Activated T-helper 1 cell treated with anti-CD3 and anti-CD28 coated beads, Interleukin-12 subunit alpha, Interleukin-12 subunit beta, Interleukin-2, Interleukin-4 antibody, amounts not matched to agents 30 ng/mL and 10 ng/mL and 1 ng/mL, durations not matched to agents 14 hours and 24 hours and 36 hours (primary cell): ENCODE measurements at regions of chr15 and their contacts with region 1.

Region 1: DNA sequence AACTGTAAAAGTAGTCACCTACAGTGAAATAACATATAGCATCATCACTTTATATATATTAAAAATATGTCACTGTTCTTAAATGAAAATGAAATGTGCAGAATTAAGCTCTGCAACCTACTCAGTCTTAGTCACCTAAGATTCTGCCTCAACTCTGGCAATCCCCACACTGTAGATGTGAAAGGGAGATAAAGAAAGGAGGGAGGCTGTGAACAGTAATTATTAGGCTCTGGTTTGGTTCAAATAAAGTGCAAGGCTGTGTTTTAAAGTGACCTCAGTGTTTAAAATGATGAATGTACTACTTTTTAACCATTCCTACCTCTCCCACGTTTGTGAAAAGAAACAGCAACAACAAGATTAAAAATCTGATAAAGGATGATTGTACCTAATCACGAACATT is 72.2 kb downstream of the ATP8B4 start:
- DNase-seq: no peak
- H3K4me3 Mint-ChIP-seq: no peak overlapping the region
- H3K27ac Mint-ChIP-seq: peak overlapping the region; percentile 94
- H3K4me1 Mint-ChIP-seq: peaks cover 42% of the 10 kb centered on the region
- H3K27me3 Mint-ChIP-seq: no peaks in the 10 kb centered on the region

Region 2: GRCh38 chr15:50028333-50028732 is 18.5 kb before region 1 on chr15:
- intact Hi-C with region 1: loop called (anchors 2 kb)
- DNase-seq: no peak
- H3K4me3 Mint-ChIP-seq: no peak overlapping the region
- H3K27ac Mint-ChIP-seq: no peak overlapping the region
- H3K4me1 Mint-ChIP-seq: peaks cover 8% of the 10 kb centered on the region
- H3K27me3 Mint-ChIP-seq: peaks cover 6% of the 10 kb centered on the region

Region 3: DNA sequence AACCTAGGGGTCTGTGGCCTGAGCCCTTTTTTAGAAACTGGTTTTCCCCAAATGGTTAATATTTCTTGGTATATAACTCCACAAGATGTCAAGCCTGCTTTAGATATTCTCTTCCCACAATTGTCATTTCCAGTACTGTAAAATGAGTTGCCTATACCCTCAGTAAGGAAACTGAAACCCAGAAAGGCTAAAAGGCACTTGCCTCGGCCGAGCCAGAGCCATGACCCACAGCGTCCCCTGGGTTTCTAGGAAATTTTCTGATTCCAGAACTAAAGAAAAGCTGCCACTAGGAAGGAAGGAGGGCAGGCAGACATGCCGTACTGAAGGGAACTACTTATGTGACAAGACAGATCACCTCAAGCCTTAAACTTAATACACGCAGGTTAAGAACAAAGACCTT is 13.0 kb after region 1 on chr15:
- intact Hi-C with region 1: loop called (anchors 1 kb)
- DNase-seq: no peak
- H3K4me3 Mint-ChIP-seq: peak overlapping the region; percentile 72
- H3K27ac Mint-ChIP-seq: peak overlapping the region; percentile 88
- H3K4me1 Mint-ChIP-seq: peaks cover 77% of the 10 kb centered on the region
- H3K27me3 Mint-ChIP-seq: peaks cover 2% of the 10 kb centered on the region

Region 4: DNA sequence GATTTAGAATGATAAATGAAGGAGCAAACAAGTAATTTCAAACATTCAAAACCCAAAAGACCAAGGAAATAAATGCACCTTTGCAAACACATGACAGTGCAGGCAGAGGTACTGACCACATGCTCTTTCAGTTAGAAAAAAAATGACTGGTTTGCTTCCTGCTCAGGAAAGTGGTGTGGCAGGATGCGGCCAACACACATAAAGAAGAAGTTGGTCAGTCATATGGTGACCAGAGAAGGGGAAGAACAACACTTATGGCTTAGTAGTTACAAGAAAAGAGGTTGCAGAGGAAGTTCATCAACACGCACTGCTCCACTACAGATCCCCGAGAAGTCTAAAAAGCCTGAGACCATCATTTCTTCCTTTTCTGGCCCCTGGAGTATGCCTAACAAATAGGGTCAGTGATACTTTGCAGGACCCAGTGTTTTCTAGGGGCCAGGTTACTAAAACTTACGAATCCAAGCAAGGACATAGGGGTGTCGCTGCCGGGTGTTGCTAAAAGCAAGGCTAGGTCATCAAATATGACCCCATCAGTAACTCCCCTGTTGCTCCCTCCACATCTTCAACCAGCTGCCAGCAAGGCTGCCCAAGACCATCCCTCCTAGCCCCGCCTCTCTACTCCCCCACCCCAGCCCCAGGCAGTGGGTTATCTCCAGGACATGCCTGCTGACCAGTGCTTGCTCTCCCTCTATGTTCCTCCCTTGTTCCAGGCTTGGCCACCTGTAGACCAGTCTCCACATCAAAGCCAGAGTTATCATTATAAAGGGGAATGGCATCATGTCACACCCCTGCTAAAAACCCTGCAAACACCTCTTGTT is 60.9 kb after region 1 on chr15:
- intact Hi-C with region 1: loop called (anchors 2 kb)
- DNase-seq: peak; percentile 44
- H3K4me3 Mint-ChIP-seq: peak overlapping the region; percentile 75
- H3K27ac Mint-ChIP-seq: peak overlapping the region; percentile 93
- H3K4me1 Mint-ChIP-seq: peaks cover 93% of the 10 kb centered on the region
- H3K27me3 Mint-ChIP-seq: no peaks in the 10 kb centered on the region